ENCODE measurements at regions of chr1 and their contacts with region 1.

Region 1: GRCh38 chr1:11661103-11661502 is 2.9 kb upstream of the FBXO6 start:
- DNase-seq: no peak
- ATAC-seq: no peak
- H3K4me3 ChIP-seq: no peak overlapping the region
- H3K4me3 Mint-ChIP-seq: peak overlapping the region; percentile 11
- H3K27ac ChIP-seq: no peak overlapping the region
- H3K27ac Mint-ChIP-seq: no peak overlapping the region
- H3K4me1 ChIP-seq: peaks cover 20% of the 10 kb centered on the region
- H3K4me1 Mint-ChIP-seq: peaks cover under 1% of the 10 kb centered on the region
- H3K27me3 ChIP-seq: no peaks in the 10 kb centered on the region
- H3K27me3 Mint-ChIP-seq: no peaks in the 10 kb centered on the region
- CTCF ChIP-seq: no peak

Region 2: DNA sequence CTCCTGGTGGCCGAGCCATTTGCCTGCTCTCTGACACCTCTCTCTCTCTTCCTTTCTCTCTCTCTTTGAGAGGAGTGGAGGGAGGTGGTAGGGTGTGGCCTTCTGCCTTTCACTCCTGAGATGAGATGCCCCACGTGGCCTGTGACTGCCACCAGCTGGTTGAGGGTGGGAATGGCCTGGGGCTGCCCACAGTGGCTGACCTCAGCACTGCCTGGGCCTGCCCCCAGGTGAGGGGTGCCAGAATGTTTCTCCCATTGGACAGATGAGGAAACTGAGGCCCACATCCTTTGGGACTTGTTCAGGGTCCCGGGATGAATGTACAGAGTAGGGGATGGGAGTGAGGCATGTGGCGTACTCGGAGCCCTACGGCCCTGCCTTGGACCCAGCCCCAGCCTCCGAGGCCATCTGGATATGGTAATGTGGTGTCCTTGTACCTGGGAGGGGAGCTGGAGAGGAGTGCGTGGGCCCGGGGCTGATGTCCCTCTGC is 88.1 kb after region 1 on chr1:
- CTCF ChIA-PET with region 1: interaction called, 4 read pairs
- POLR2A ChIA-PET with region 1: interaction called, 3 read pairs
- intact Hi-C with region 1: loop called in 1 of 2 experiments (anchors 1 kb)
- DNase-seq: peak in 13 of 14 experiments; percentile 28 to 77 (median 43)
- ATAC-seq: peak; percentile 99
- H3K4me3 ChIP-seq: no peak overlapping the region
- H3K4me3 Mint-ChIP-seq: no peak overlapping the region
- H3K27ac ChIP-seq: no peak overlapping the region
- H3K27ac Mint-ChIP-seq: peak overlapping the region; percentile 24
- H3K4me1 ChIP-seq: peaks cover 15% of the 10 kb centered on the region
- H3K4me1 Mint-ChIP-seq: peaks cover 7% of the 10 kb centered on the region
- H3K27me3 ChIP-seq: no peaks in the 10 kb centered on the region
- H3K27me3 Mint-ChIP-seq: no peaks in the 10 kb centered on the region
- CTCF ChIP-seq: peak; percentile 71

Region 3: GRCh38 chr1:12019858-12020509 is 358.9 kb after region 1 on chr1:
- CTCF ChIA-PET with region 1: no interaction called
- POLR2A ChIA-PET with region 1: no interaction called
- intact Hi-C with region 1: no loop called
- DNase-seq: peak in 2 of 14 experiments; percentile 36 to 40
- ATAC-seq: no peak
- H3K4me3 ChIP-seq: peak overlapping the region; percentile 81
- H3K4me3 Mint-ChIP-seq: peak overlapping the region; percentile 87
- H3K27ac ChIP-seq: peak overlapping the region in 1 of 2 donors; percentile 17
- H3K27ac Mint-ChIP-seq: peak overlapping the region; percentile 77
- H3K4me1 ChIP-seq: peaks cover 19% of the 10 kb centered on the region
- H3K4me1 Mint-ChIP-seq: peaks cover 12% of the 10 kb centered on the region
- H3K27me3 ChIP-seq: no peaks in the 10 kb centered on the region
- H3K27me3 Mint-ChIP-seq: no peaks in the 10 kb centered on the region
- CTCF ChIP-seq: no peak